ENCODE measurements at regions of chr14 and their contacts with region 1.

Region 1: GRCh38 chr14:55102141-55102621 is 26.9 kb upstream of the LGALS3 start:
- DNase-seq: peak; percentile 71
- H3K4me3 Mint-ChIP-seq: peak overlapping the region; percentile 17
- H3K27ac Mint-ChIP-seq: peak overlapping the region; percentile 95
- H3K4me1 Mint-ChIP-seq: peaks cover 49% of the 10 kb centered on the region
- H3K27me3 Mint-ChIP-seq: no peaks in the 10 kb centered on the region

Region 2: GRCh38 chr14:55051426-55052268 is 50.5 kb before region 1 on chr14 and contains the start of gene MAPK1IP1L:
- CTCF ChIA-PET with region 1: interaction called, 4 read pairs
- POLR2A ChIA-PET with region 1: interaction called, 10 read pairs
- intact Hi-C with region 1: loop called (anchors 5 kb)
- DNase-seq: peak; percentile 94
- H3K4me3 Mint-ChIP-seq: peak within 1 kb of the TSS; percentile 82
- H3K27ac Mint-ChIP-seq: peak within 1 kb of the TSS; percentile 94
- H3K4me1 Mint-ChIP-seq: peaks cover 36% of the 10 kb centered on the region
- H3K27me3 Mint-ChIP-seq: no peaks in the 10 kb centered on the region
- total RNA-seq, gene MAPK1IP1L: 85.5 to 89.1 TPM

Region 3: DNA sequence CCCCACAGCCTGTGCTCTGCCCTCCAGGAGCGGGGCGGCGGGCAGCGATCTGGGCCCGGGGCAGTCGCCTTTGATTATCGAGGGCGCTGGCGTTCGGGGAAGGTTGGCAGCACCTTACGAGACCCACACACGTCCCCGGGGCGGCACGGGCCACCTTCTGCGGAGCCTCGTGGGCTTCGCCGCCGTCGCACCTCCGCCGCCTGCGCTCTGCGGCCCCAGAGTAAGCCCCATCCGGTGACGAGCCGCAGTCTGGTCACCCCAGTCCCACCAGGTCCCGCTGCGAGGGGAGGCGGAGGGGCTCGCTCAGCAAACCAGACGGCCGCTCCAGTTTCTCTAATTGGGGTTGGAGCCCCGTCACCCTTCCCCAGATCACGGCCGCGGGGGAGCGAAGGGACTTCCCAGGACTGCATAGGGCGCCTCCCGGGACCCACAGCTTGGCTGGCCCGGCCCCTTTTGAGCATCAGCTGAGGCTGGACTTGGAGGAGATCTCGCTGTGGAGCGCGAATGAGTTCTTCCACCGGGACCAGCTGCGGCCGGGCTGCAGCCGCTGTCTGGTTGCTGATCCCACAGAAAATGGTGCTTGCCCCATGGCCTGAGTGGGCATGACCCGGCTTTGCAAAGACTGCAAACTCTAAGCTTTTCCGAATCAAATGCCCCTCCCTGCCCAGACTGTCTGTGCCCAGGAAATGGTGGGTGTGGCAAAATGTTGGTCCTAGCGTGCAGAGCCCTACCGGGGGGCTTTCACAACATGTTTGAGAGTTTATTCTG is 27.4 kb after region 1 on chr14:
- CTCF ChIA-PET with region 1: interaction called, 4 read pairs
- POLR2A ChIA-PET with region 1: interaction called, 4 read pairs
- intact Hi-C with region 1: loop called (anchors 1 kb)
- DNase-seq: peak; percentile 64
- H3K4me3 Mint-ChIP-seq: peak overlapping the region; percentile 69
- H3K27ac Mint-ChIP-seq: no peak overlapping the region
- H3K4me1 Mint-ChIP-seq: peaks cover 26% of the 10 kb centered on the region
- H3K27me3 Mint-ChIP-seq: peaks cover 20% of the 10 kb centered on the region

Region 4: DNA sequence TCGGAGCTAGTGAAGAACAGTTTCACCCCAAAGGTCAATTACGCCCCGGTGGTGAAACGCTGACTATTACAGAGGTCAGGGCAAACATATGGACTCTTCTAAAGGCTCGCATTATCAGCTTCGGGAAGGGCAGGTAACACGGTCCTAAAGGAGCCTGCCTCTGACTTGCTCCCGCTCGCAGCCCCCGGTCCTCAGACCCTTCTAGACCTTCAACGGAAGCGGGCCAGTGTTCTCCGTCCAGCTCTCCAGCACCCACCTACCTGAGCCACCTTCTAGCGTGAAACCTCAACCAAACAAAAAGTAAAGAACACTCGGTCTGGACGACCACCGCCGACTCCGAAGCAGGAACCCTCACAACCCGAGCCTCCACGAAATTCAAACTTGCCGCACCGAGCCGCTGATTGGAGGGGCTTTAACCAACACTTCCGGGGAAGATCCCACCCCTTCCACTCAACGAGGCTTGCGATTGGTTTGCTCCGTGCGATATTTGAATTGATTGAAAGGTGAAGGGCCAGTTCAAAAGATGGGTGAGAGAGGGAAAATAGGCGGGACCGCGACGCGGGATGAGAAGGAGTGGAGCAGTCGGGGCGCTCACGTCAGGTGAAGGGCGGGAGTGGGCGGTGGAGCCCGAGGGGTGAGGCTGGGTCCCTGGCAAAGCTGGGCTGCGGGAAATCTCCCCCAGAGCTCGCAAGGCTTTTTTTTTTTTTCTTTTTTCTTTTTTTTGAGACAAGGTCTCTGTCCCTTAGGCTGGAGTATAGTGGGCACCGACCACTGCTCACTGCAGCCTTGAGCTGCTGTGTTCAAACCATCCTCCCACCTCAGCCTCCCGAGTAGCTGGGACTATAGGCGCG is 89.2 kb after region 1 on chr14 and contains the start of gene DLGAP5:
- CTCF ChIA-PET with region 1: no interaction called
- POLR2A ChIA-PET with region 1: interaction called, 4 read pairs
- intact Hi-C with region 1: loop called (anchors 1 kb)
- DNase-seq: peak; percentile 96
- H3K4me3 Mint-ChIP-seq: peak within 1 kb of the TSS; percentile 89
- H3K27ac Mint-ChIP-seq: peak within 1 kb of the TSS; percentile 79
- H3K4me1 Mint-ChIP-seq: peaks cover 27% of the 10 kb centered on the region
- H3K27me3 Mint-ChIP-seq: no peaks in the 10 kb centered on the region
- total RNA-seq, gene DLGAP5: 92.7 to 97.9 TPM

Region 5: GRCh38 chr14:55373784-55374705 is 271.9 kb after region 1 on chr14:
- CTCF ChIA-PET with region 1: no interaction called
- POLR2A ChIA-PET with region 1: no interaction called
- intact Hi-C with region 1: loop called (anchors 5 kb)
- DNase-seq: peak; percentile 45
- H3K4me3 Mint-ChIP-seq: peak overlapping the region; percentile 49
- H3K27ac Mint-ChIP-seq: peak overlapping the region; percentile 91
- H3K4me1 Mint-ChIP-seq: peaks cover 45% of the 10 kb centered on the region
- H3K27me3 Mint-ChIP-seq: no peaks in the 10 kb centered on the region